CD4-positive, alpha-beta memory T cell (primary cell): ENCODE measurements at regions of chr2 and their contacts with region 1.

Region 1: GRCh38 chr2:54522624-54523281 is 66.6 kb downstream of the SPTBN1 start:
- DNase-seq: peak; percentile 70 to 79 (median 73)
- H3K4me3 ChIP-seq: no peak overlapping the region
- H3K4me3 Mint-ChIP-seq: peak overlapping the region in 4 of 8 donors; percentile 15 to 78 (median 36)
- H3K27ac ChIP-seq: no peak overlapping the region
- H3K27ac Mint-ChIP-seq: peak overlapping the region in 5 of 7 donors; percentile 42 to 92 (median 78)
- H3K4me1 ChIP-seq: no peaks in the 10 kb centered on the region
- H3K4me1 Mint-ChIP-seq: peaks cover 4 to 6% (median 6%) of the 10 kb centered on the region in 4 donors
- H3K27me3 ChIP-seq: no peaks in the 10 kb centered on the region
- H3K27me3 Mint-ChIP-seq: peaks cover 0 to 5% of the 10 kb centered on the region in 2 donors

Region 2: DNA sequence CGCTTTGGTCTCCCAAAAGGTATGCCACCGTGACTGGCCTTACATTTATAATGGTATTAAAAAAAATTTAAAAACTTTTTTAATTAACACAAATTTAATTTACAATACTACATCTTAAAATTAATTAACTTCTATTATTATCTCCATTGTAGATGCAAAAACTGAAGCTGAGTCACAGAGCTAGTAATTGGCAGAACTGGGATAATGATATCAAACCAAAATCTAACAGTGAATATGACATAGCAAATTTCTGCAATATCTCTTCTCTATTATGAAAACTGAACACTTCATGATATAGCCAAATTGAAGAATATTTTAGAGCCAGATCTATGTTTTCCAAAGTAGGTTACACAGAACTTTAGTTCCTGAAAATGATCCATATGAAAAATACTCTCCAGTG is 821.5 kb before region 1 on chr2:
- CTCF ChIA-PET with region 1: no interaction called
- POLR2A ChIA-PET with region 1: no interaction called
- intact Hi-C with region 1: no loop called
- DNase-seq: no peak
- H3K4me3 ChIP-seq: no peak overlapping the region
- H3K4me3 Mint-ChIP-seq: no peak overlapping the region
- H3K27ac ChIP-seq: no peak overlapping the region
- H3K27ac Mint-ChIP-seq: no peak overlapping the region
- H3K4me1 ChIP-seq: no peaks in the 10 kb centered on the region
- H3K4me1 Mint-ChIP-seq: peaks cover 0 to 6% (median 2%) of the 10 kb centered on the region in 4 donors
- H3K27me3 ChIP-seq: no peaks in the 10 kb centered on the region
- H3K27me3 Mint-ChIP-seq: no peaks in the 10 kb centered on the region

Region 3: DNA sequence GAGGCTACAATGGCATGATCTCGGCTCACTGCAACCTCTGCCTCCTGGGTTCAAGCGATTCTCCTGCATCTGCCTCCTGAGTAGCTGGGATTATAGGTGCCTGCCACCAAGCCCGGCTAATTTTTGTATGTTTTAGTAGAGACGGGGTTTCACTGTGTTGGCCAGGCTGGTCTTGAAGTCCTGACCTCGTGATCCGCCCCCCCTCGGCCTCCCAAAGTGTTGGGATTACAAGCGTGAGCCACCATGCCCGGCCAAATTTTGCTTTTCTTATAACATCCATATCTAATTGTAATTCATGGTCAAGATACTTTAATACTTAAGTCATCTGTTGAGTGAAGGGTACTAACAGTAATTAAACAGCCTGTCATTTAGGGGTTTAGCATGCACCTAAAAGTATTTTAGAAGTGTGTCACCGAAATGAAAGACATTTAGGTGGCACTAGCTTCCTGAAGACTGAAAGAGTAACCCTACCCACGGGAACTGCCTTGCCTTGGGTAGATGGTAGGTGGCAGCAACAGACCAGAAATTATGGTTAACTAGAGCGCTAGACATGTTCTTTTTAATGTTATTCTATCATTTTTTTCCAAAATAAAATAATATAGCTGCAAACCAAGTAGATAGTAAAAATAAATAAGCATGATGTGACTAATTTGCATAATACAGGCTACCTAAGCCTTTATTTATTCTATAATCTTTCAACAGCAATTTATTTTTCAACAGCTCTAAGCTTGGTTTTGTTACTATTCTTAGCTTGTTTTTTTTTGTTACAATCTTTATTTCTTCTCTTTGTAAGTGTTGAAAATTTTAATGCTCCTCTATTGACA is 415.9 kb before region 1 on chr2:
- CTCF ChIA-PET with region 1: interaction called, 31 read pairs
- POLR2A ChIA-PET with region 1: no interaction called
- intact Hi-C with region 1: loop called (anchors 10 kb)
- DNase-seq: peak; percentile 39 to 56 (median 54)
- H3K4me3 ChIP-seq: no peak overlapping the region
- H3K4me3 Mint-ChIP-seq: no peak overlapping the region
- H3K27ac ChIP-seq: no peak overlapping the region
- H3K27ac Mint-ChIP-seq: peak overlapping the region in 1 of 7 donors; percentile 68
- H3K4me1 ChIP-seq: peaks cover 13% of the 10 kb centered on the region
- H3K4me1 Mint-ChIP-seq: peaks cover 8 to 12% (median 9%) of the 10 kb centered on the region in 4 donors
- H3K27me3 ChIP-seq: no peaks in the 10 kb centered on the region
- H3K27me3 Mint-ChIP-seq: no peaks in the 10 kb centered on the region

Region 4: DNA sequence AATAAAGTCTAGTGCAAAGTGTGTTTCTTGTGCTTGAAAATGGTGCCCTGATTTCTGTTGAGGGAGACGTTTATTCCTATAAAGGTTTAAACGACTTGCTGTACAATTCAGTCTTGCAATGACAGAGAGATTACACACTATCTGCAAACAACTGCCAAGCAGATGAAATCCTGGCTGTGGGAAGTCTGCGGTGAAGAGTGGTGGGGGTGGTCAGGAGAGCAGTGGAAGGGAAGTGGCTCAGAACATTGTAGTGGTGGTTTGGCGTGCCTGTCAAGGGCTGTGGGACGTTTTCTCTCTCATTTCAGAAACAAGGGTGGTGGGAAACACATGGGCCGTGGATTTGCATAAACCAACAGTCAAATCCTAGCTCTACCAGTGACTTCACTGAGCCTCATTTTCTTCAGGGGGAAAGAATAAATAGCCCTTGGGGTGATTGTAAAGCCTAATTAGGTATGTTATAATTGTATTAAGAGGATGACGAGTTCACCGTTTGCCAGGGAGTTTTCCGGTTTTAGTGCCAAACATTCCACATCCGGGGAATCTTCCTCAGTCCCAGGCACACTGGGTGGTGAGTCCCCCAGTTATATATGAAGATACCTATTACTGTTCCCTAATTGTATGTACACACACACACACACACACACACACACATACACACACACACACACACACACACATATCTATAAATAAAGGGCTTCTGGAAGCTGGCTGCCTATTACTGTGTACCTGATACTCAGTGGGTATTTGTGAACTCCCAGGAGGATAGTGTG is 48.4 kb after region 1 on chr2:
- CTCF ChIA-PET with region 1: interaction called, 6 read pairs
- POLR2A ChIA-PET with region 1: interaction called, 4 read pairs
- intact Hi-C with region 1: loop called (anchors 1 kb)
- DNase-seq: peak; percentile 63 to 87 (median 72)
- H3K4me3 ChIP-seq: peak overlapping the region in 1 of 2 donors; percentile 11
- H3K4me3 Mint-ChIP-seq: peak overlapping the region; percentile 43 to 95 (median 80)
- H3K27ac ChIP-seq: peak overlapping the region; percentile 94
- H3K27ac Mint-ChIP-seq: peak overlapping the region; percentile 93 to 99 (median 99)
- H3K4me1 ChIP-seq: peaks cover 96% of the 10 kb centered on the region
- H3K4me1 Mint-ChIP-seq: peaks cover 64 to 99% (median 84%) of the 10 kb centered on the region in 4 donors
- H3K27me3 ChIP-seq: no peaks in the 10 kb centered on the region
- H3K27me3 Mint-ChIP-seq: no peaks in the 10 kb centered on the region

Region 5: GRCh38 chr2:54624591-54625071 is 101.9 kb after region 1 on chr2:
- CTCF ChIA-PET with region 1: interaction called, 18 read pairs
- POLR2A ChIA-PET with region 1: no interaction called
- intact Hi-C with region 1: loop called (anchors 5 kb)
- DNase-seq: no peak
- H3K4me3 ChIP-seq: no peak overlapping the region
- H3K4me3 Mint-ChIP-seq: no peak overlapping the region
- H3K27ac ChIP-seq: no peak overlapping the region
- H3K27ac Mint-ChIP-seq: peak overlapping the region in 1 of 7 donors; percentile 62
- H3K4me1 ChIP-seq: no peaks in the 10 kb centered on the region
- H3K4me1 Mint-ChIP-seq: peaks cover under 1 to 14% (median 4%) of the 10 kb centered on the region in 4 donors
- H3K27me3 ChIP-seq: no peaks in the 10 kb centered on the region
- H3K27me3 Mint-ChIP-seq: no peaks in the 10 kb centered on the region

Region 6: DNA sequence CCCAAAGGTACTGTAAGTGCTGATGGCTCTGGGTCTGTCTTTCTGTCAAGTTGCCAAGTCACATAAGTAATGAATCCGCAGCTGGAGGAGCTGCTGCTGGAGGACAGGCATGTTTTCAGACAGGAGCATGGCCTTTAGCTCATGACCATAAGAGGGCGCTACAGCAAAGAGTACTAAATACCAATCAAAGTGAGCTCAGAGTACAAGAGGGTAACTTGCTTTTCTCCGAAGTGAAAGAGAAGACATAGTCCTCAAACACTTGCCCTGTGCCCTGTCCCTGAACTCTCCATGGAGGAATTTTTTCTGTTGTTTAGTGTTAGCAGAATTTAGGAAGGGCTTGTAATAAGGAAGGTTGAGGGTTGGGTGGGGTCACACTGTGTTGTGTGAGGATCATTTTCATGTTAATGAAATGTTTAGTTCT is 142.7 kb after region 1 on chr2:
- CTCF ChIA-PET with region 1: interaction called, 34 read pairs
- POLR2A ChIA-PET with region 1: no interaction called
- intact Hi-C with region 1: loop called (anchors 2 kb)
- DNase-seq: peak; percentile 11 to 52 (median 34)
- H3K4me3 ChIP-seq: no peak overlapping the region
- H3K4me3 Mint-ChIP-seq: no peak overlapping the region
- H3K27ac ChIP-seq: no peak overlapping the region
- H3K27ac Mint-ChIP-seq: peak overlapping the region in 6 of 7 donors; percentile 9 to 85 (median 70)
- H3K4me1 ChIP-seq: no peaks in the 10 kb centered on the region
- H3K4me1 Mint-ChIP-seq: peaks cover 0 to 13% (median 3%) of the 10 kb centered on the region in 4 donors
- H3K27me3 ChIP-seq: no peaks in the 10 kb centered on the region
- H3K27me3 Mint-ChIP-seq: no peaks in the 10 kb centered on the region

Region 7: DNA sequence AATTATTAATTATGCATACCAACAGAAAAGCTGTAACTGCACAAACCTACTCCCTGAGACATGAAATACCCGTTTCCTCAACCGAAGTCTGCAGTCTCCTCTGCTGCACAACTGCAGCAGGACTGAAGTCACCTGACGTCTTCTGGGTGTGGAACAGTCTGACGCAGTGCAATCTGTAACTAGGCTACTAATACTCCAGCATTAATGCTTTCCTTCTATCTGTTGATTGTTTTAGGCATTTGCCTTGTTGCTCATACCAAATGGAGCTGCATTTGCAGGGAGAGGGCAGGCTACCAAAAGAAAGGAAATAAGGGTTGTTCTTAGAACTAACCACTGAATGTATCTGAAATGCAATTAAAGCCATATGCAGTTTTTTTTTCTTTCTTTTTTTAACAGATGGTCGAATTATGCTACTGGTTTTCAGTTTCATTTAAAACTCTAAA is 487.4 kb after region 1 on chr2:
- CTCF ChIA-PET with region 1: no interaction called
- POLR2A ChIA-PET with region 1: no interaction called
- intact Hi-C with region 1: loop called (anchors 10 kb)
- DNase-seq: peak; percentile 50 to 82 (median 71)
- H3K4me3 ChIP-seq: peak overlapping the region; percentile 9 to 44
- H3K4me3 Mint-ChIP-seq: peak overlapping the region; percentile 83 to 97 (median 93)
- H3K27ac ChIP-seq: peak overlapping the region; percentile 44
- H3K27ac Mint-ChIP-seq: peak overlapping the region; percentile 80 to 98 (median 94)
- H3K4me1 ChIP-seq: peaks cover 80% of the 10 kb centered on the region
- H3K4me1 Mint-ChIP-seq: peaks cover 45 to 73% (median 60%) of the 10 kb centered on the region in 4 donors
- H3K27me3 ChIP-seq: no peaks in the 10 kb centered on the region
- H3K27me3 Mint-ChIP-seq: no peaks in the 10 kb centered on the region